CD14-positive monocyte (primary cell): ENCODE measurements at regions of chr6 and their contacts with region 1.

Region 1: DNA sequence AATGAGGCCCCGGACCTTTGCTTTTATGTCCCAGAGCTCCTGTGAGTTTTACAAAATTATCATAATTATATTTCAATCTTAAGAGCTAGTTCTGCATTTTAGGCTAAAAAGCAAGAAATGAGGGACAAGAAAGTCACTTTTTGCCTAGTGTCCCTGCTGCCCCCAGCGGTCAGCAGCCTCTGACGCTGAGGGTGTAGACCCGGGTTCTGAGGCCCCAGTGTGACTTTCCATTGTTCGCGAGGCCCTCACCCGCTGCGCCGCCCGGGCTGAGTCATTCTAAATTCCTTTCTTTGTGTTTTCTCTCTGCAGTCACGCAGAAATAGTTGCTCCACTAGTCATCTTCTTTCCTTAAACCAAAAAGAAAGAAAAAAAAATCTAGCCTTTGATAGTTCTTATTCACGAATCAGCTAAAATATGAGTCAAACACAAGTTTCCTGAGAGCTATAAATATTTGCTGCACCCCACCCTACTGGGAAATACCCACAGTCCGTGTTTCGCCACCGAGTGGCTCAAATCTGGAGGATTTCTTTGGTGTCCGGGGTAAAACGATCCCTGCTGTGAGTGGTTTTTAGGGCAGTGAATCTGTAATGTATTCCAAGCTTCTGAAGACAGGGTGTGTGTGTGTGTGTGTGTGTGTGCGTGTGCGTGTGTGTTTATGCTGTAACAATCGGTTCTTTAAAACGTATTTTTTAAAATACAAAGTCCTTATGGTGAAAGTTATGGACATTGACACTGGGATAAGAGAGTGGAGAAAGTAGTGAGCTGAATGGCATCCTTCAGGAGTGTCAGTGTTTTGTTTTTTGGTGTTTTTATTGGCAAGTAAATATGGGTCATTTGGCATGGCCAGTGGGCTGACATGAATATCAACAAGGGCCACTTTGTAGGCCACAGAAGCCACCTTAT is 59.7 kb upstream of the EEF1A1 start:
- DNase-seq: peak; percentile 96 to 97 (median 97)
- H3K4me3 ChIP-seq: peak overlapping the region; percentile 23 to 62 (median 24)
- H3K4me3 Mint-ChIP-seq: peak overlapping the region; percentile 62 to 80
- H3K27ac ChIP-seq: peak overlapping the region; percentile 96 to 99
- H3K27ac Mint-ChIP-seq: peak overlapping the region; percentile 96 to 100 (median 99)
- H3K4me1 ChIP-seq: peaks cover 48 to 59% of the 10 kb centered on the region in 2 donors
- H3K4me1 Mint-ChIP-seq: peaks cover 50% of the 10 kb centered on the region
- H3K27me3 ChIP-seq: no peaks in the 10 kb centered on the region
- H3K27me3 Mint-ChIP-seq: no peaks in the 10 kb centered on the region
- CTCF ChIP-seq: peak; percentile 45

Region 2: DNA sequence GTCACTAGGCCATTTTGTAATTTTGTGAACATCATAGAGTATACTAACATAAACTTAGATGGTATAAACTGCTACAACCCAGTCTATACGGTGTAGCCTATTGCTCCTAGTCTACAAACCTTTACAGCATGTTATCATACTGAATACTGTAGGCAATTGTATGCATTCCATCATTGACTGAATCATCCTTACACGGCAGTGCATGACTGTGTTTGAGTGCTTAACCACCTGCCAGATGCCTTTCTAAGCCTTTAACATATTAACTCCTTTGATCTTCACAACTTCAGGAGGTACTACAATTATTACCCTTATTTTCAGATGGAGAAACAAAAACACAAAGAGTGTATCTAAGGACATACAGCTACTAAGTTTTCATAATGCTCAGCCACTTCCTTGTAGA is 240.4 kb before region 1 on chr6:
- intact Hi-C with region 1: no loop called
- DNase-seq: no peak
- H3K4me3 ChIP-seq: no peak overlapping the region
- H3K4me3 Mint-ChIP-seq: no peak overlapping the region
- H3K27ac ChIP-seq: no peak overlapping the region
- H3K27ac Mint-ChIP-seq: no peak overlapping the region
- H3K4me1 ChIP-seq: no peaks in the 10 kb centered on the region
- H3K4me1 Mint-ChIP-seq: no peaks in the 10 kb centered on the region
- H3K27me3 ChIP-seq: no peaks in the 10 kb centered on the region
- H3K27me3 Mint-ChIP-seq: peaks cover 4 to 9% (median 6%) of the 10 kb centered on the region in 3 donors
- CTCF ChIP-seq: no peak

Region 3: DNA sequence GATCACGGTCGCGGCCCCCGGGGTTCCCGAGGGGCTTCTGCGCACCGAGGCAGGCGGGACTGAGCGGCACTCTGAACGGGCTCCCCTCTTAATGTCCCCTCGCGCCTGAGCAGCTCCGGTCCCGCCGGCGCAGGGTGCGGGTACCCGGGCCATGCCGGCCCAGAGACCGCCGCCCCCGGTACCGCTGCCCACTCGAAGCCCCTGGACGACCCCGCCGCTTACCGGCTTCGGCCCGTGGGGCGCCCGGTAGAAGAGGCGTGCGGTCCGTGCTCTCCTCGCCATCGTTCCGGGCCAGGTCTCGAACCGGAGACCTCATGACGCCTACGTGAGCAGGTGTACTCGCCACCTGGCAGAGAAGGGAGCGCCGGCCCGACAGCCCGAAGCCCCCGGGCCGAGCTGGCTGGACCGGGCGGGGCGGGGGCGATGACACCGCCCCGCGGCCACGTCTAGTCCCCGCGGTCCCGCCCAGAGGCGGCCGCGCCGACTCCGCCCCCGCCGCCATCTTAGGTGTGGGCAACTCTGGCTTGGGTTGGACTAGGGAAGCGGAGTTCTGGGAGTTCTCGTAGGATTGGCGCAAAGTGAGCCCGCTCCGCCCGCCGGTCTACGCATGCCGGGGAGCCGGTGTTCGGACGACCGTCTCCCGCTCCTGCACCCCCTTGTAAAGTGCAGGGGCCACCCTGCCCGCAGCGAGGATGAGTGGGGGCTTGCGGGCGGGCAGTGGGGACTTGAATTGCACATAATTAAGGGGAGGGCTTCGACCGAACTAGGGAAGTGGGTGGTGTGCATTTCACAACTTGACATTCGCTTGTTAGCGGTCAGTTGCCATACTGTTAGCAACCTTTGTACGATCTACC is 73.3 kb after region 1 on chr6 and contains the start of gene SLC17A5:
- intact Hi-C with region 1: loop called in 1 of 2 experiments (anchors 10 kb)
- DNase-seq: peak; percentile 94 to 95 (median 95)
- H3K4me3 ChIP-seq: peak within 1 kb of the TSS; percentile 80 to 92 (median 87)
- H3K4me3 Mint-ChIP-seq: peak within 1 kb of the TSS; percentile 90 to 98
- H3K27ac ChIP-seq: peak within 1 kb of the TSS; percentile 99 to 100
- H3K27ac Mint-ChIP-seq: peak within 1 kb of the TSS; percentile 97 to 99 (median 98)
- H3K4me1 ChIP-seq: peaks cover 14 to 21% of the 10 kb centered on the region in 2 donors
- H3K4me1 Mint-ChIP-seq: peaks cover 18% of the 10 kb centered on the region
- H3K27me3 ChIP-seq: no peaks in the 10 kb centered on the region
- H3K27me3 Mint-ChIP-seq: peaks cover 0 to 2% (median 0%) of the 10 kb centered on the region in 3 donors
- CTCF ChIP-seq: no peak
- polyA plus RNA-seq, gene SLC17A5: 5.3 to 11.6 (median 9.4) TPM

Region 4: DNA sequence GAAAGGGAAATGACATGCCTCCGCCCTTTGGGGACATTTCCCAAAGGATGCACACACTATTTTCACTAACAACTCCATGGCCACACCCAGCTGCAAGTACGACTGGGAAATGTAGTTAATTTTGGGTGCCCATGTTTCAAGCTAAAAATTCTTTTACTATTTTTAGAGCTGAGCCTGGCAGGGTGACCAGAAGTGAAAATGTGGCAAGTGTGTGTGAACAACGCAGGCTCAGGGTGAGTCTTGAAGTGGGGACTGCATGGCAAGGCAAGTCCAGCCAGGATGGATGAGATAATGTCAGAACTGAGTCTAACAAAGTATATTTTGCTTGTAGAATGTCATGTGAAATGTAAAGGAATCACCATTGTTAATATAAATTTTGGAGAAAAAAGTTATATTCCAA is 98.5 kb after region 1 on chr6:
- intact Hi-C with region 1: no loop called
- DNase-seq: no peak
- H3K4me3 ChIP-seq: no peak overlapping the region
- H3K4me3 Mint-ChIP-seq: no peak overlapping the region
- H3K27ac ChIP-seq: no peak overlapping the region
- H3K27ac Mint-ChIP-seq: no peak overlapping the region
- H3K4me1 ChIP-seq: no peaks in the 10 kb centered on the region
- H3K4me1 Mint-ChIP-seq: peaks cover 5% of the 10 kb centered on the region
- H3K27me3 ChIP-seq: no peaks in the 10 kb centered on the region
- H3K27me3 Mint-ChIP-seq: peaks cover 0 to 3% (median 0%) of the 10 kb centered on the region in 3 donors
- CTCF ChIP-seq: no peak